HepG2 (cell line): ENCODE measurements at regions of chr2 and their contacts with region 1.

Region 1: DNA sequence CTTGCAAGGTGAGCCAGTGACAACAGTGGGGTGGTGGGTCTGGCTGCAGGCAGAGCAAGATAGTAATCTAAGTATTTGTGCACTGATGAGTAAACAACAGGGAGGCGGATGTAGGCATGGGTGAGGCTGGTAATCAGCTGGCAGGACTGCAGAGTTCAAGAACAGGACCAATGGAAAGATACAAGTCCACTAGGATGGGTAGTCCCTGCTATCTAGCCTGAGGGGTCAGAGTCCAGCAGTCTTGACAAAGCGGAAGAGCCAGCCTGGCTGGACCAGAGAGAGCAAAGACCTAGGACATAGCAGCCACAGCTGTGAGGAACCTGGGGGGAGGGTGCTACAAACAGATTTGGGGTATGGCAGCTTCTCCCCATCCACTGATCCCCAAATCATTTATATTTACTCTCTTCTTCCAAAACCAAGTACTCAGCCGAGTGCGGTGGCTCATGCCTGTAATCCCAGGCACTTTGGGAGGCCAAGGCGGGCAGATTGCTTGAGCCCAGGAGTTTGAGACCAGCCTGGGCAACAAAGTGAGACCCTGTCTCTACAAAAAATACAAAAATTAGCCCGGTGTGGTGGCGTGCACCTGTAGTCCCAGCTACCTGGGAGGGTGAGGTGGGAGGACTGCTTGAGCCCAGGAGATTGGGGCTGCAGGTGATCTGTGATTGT is 25.9 kb downstream of the VIL1 start:
- DNase-seq: peak; percentile 99
- ATAC-seq: peak; percentile 92
- H3K4me3 ChIP-seq: 0 out of 6 replicates have a peak overlapping the region, but pooled peaks of 1 of the 3 experiments have one; percentile 19
- H3K27ac ChIP-seq: peak overlapping the region; percentile 67
- H3K4me1 ChIP-seq: peaks cover 75% of the 10 kb centered on the region
- H3K27me3 ChIP-seq: no peaks in the 10 kb centered on the region
- CTCF ChIP-seq: peak; percentile 36
- EP300 ChIP-seq: peak; percentile 49 to 94; a peak in 3 of 4 replicates
- POLR2A ChIP-seq: peak in 1 of 2 experiments; percentile 34; a peak in 2 of 4 replicates
- RAD21 ChIP-seq: peak; percentile 57; the same call in 1 of the 2 replicates

Region 2: DNA sequence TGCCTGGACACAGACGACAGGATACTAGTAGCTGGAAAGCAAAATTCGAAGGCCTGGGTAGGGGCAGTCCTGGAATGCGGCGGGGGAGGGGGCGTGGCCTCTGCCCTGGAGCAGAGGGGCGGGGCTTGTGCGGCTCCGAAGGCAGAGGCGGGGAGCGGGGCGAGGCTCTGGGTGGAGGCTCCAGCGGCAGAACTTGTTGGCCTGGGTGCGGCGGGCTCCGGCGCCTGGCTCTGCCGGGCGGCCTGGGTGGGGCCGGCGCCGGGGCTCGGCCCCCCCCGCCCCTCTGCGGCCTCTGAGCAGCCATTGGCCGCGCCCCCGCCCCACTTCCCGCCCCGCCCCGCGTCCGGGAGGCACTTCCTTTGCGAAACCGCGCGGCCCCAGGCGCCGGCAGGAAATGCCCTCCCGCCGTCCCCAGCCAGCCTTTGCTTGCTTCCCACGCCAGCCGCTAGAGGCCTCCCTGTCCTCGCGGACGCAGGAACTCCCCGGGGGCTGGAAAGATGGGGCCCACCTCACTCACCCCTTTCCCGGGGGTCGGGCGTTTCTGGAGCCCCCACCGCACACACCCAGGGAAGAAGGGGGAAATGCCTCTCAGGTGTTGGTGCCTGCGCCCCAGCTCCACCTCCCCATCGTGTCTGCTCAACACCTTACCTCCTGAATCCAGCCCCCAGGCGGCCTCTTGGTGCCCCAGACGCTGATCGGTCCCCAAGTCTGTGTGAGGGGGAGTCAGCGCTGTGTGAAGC is 38.4 kb before region 1 on chr2:
- CTCF ChIA-PET with region 1: no interaction called
- POLR2A ChIA-PET with region 1: interaction called, 25 read pairs
- in situ Hi-C with region 1: no loop called
- intact Hi-C with region 1: loop called (anchors 2 kb)
- DNase-seq: peak; percentile 92
- ATAC-seq: peak; percentile 78
- H3K4me3 ChIP-seq: peak overlapping the region; percentile 67 to 86 (median 67)
- H3K27ac ChIP-seq: peak overlapping the region; percentile 79
- H3K4me1 ChIP-seq: peaks cover 61% of the 10 kb centered on the region
- H3K27me3 ChIP-seq: no peaks in the 10 kb centered on the region
- CTCF ChIP-seq: peak; percentile 98
- EP300 ChIP-seq: peak; percentile 37 to 53; a peak in 2 of 4 replicates
- POLR2A ChIP-seq: peak in 1 of 2 experiments; percentile 23; a peak in 1 of 4 replicates
- RAD21 ChIP-seq: peak; percentile 98

Region 3: DNA sequence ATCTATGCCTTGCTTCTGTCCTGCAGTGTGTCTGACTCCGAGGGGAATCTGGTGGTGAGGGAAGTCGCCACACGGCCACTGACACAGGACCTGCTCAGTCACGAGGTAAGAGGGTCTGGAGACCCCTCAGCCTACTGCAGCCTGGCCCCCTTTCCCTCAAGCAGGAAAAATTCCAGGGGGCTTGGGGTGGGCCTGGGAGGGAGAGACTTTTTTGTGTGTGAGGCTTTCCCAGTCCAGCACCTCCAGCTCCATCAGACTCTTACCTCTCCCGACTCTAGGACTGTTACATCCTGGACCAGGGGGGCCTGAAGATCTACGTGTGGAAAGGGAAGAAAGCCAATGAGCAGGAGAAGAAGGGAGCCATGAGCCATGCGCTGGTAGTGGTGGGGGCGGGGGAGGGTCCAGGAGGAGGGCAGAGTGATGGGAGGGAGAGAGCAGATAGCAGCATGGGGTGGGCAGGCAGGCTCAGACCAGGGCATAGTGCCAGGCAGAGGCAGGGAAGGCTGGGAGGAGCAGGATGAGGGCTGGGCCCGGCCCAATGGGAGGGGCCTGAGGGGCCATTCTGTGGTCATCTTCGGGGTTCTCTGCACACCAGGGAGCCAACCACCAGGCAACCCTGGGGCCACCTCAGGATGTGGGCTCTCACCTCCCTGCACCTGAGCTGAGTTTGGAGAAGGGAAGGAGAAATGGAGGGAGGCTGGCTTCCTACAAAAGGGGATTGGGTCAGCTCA is 15.1 kb before region 1 on chr2:
- CTCF ChIA-PET with region 1: no interaction called
- POLR2A ChIA-PET with region 1: interaction called, 27 read pairs
- in situ Hi-C with region 1: no loop called
- intact Hi-C with region 1: no loop called
- DNase-seq: no peak
- ATAC-seq: peak; percentile 10
- H3K4me3 ChIP-seq: no peak overlapping the region
- H3K27ac ChIP-seq: no peak overlapping the region
- H3K4me1 ChIP-seq: peaks cover 7% of the 10 kb centered on the region
- H3K27me3 ChIP-seq: no peaks in the 10 kb centered on the region
- CTCF ChIP-seq: no peak
- EP300 ChIP-seq: no peak
- POLR2A ChIP-seq: no peak
- RAD21 ChIP-seq: no peak